ENCODE measurements at regions of chrX and their contacts with region 1.

Region 1: GRCh38 chrX:25144043-25144940 is 128.5 kb upstream of the ARX start:
- DNase-seq: peak; percentile 68
- ATAC-seq: peak; percentile 55
- H3K4me3 ChIP-seq: no peak overlapping the region
- H3K27ac ChIP-seq: no peak overlapping the region
- H3K4me1 ChIP-seq: no peaks in the 10 kb centered on the region
- H3K27me3 ChIP-seq: no peaks in the 10 kb centered on the region
- CTCF ChIP-seq: peak; percentile 67

Region 2: DNA sequence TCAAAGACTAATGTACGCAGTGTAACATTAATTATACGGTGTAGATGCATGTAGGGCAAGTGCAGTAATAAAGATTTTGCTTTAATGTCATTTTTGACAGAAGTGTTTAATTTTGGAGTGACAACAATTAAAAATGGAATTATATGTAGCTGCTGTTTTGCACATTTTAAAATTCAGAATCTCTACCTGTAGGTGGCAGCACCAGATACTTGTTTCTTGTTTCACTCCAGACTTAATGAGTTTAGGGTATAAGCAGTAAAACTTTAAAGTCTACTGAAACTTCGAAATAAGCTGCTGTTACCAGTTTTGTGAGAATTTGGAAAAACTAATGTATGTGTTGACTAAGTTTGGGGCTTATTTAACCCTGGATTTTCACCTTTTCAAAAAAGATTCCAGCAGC is 305.7 kb before region 1 on chrX:
- intact Hi-C with region 1: loop called (anchors 10 kb)
- DNase-seq: no peak
- ATAC-seq: no peak
- H3K4me3 ChIP-seq: no peak overlapping the region
- H3K27ac ChIP-seq: no peak overlapping the region
- H3K4me1 ChIP-seq: no peaks in the 10 kb centered on the region
- H3K27me3 ChIP-seq: no peaks in the 10 kb centered on the region
- CTCF ChIP-seq: peak; percentile 54

Region 3: GRCh38 chrX:25427873-25428555 is 283.7 kb after region 1 on chrX:
- intact Hi-C with region 1: no loop called
- DNase-seq: no peak
- ATAC-seq: no peak
- H3K4me3 ChIP-seq: no peak overlapping the region
- H3K27ac ChIP-seq: no peak overlapping the region
- H3K4me1 ChIP-seq: no peaks in the 10 kb centered on the region
- H3K27me3 ChIP-seq: no peaks in the 10 kb centered on the region
- CTCF ChIP-seq: no peak

Measured in upper lobe of right lung (tissue), 1 donor.